ENCODE measurements at regions of chr19 and their contacts with region 1.

Region 1: GRCh38 chr19:42283143-42284065 is 14.4 kb downstream of the CIC start:
- DNase-seq: peak; percentile 97
- H3K4me3 Mint-ChIP-seq: no peak overlapping the region
- H3K27ac Mint-ChIP-seq: no peak overlapping the region
- H3K4me1 Mint-ChIP-seq: peaks cover 31% of the 10 kb centered on the region
- H3K27me3 Mint-ChIP-seq: no peaks in the 10 kb centered on the region

Region 2: DNA sequence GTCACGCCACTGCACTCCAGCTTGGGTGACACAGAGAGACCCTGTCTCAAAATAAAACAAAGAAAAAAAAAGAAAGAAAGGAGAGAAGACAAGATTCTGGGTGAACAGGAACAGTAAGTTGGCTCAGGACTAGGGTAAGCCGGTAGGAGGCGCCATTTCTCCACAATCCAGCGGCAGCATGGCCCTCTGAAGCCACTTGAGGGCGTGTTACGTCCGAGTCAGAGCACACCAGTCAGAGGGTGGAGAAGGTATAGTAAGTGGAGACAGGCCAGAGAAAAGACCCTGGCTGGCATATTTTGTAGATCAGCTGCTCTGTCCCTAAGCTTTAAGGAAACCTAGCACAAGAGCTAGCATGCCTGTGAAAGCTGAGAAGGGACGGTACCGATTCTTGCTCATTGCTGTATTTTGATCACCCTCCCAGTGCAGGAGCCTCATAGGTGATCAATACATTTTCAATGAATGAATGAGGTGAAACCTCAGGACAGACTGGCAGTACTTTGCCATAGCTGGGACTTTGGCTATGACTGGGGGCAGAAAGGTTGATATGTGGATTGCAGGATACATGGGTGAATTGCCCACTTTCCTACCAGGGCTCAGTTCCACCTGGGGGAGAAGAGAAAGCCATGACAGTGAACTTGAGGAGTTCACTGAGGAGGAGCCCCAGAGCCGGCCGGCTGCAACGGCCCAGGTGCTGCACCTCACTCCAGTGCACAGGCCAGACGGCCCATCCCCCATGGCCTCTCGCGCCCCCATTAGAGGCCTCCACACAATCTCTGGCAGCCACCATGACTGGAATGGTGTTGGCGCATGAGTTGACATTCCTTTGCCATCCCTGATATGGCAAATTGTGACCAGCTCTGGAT is 174.6 kb before region 1 on chr19:
- CTCF ChIA-PET with region 1: interaction called, 23 read pairs
- POLR2A ChIA-PET with region 1: no interaction called
- DNase-seq: peak; percentile 92
- H3K4me3 Mint-ChIP-seq: no peak overlapping the region
- H3K27ac Mint-ChIP-seq: no peak overlapping the region
- H3K4me1 Mint-ChIP-seq: peaks cover 34% of the 10 kb centered on the region
- H3K27me3 Mint-ChIP-seq: no peaks in the 10 kb centered on the region

Region 3: GRCh38 chr19:42132851-42133528 is 150.4 kb before region 1 on chr19:
- CTCF ChIA-PET with region 1: interaction called, 45 read pairs
- POLR2A ChIA-PET with region 1: interaction called, 8 read pairs
- DNase-seq: peak; percentile 85
- H3K4me3 Mint-ChIP-seq: peak overlapping the region; percentile 82
- H3K27ac Mint-ChIP-seq: peak overlapping the region; percentile 81
- H3K4me1 Mint-ChIP-seq: peaks cover 64% of the 10 kb centered on the region
- H3K27me3 Mint-ChIP-seq: no peaks in the 10 kb centered on the region

Region 4: DNA sequence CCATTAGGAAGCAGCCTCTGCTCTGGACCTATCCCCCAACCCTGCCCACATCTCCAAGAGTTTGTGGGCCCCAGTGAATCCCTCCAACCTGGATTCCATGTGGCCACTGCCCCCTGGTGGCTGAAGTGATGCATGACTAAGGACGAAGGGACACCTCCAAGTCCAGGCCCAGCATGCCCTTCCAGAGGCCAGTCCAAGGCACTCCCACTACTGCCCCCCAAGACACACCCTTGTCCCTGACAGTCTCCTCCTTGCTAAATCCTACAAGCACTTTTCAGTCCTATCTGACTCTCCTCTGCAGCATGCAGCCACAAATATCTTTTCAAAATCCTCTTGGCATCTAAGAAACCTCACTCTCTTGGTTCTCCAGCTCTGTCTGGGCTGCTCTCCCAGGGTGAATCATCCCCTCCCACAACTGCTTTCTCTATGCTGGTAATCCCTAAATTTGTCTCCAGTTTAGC is 99.0 kb before region 1 on chr19:
- CTCF ChIA-PET with region 1: interaction called, 12 read pairs
- POLR2A ChIA-PET with region 1: interaction called, 3 read pairs
- DNase-seq: peak; percentile 72
- H3K4me3 Mint-ChIP-seq: peak overlapping the region; percentile 7
- H3K27ac Mint-ChIP-seq: peak overlapping the region; percentile 89
- H3K4me1 Mint-ChIP-seq: peaks cover 57% of the 10 kb centered on the region
- H3K27me3 Mint-ChIP-seq: no peaks in the 10 kb centered on the region

Region 5: DNA sequence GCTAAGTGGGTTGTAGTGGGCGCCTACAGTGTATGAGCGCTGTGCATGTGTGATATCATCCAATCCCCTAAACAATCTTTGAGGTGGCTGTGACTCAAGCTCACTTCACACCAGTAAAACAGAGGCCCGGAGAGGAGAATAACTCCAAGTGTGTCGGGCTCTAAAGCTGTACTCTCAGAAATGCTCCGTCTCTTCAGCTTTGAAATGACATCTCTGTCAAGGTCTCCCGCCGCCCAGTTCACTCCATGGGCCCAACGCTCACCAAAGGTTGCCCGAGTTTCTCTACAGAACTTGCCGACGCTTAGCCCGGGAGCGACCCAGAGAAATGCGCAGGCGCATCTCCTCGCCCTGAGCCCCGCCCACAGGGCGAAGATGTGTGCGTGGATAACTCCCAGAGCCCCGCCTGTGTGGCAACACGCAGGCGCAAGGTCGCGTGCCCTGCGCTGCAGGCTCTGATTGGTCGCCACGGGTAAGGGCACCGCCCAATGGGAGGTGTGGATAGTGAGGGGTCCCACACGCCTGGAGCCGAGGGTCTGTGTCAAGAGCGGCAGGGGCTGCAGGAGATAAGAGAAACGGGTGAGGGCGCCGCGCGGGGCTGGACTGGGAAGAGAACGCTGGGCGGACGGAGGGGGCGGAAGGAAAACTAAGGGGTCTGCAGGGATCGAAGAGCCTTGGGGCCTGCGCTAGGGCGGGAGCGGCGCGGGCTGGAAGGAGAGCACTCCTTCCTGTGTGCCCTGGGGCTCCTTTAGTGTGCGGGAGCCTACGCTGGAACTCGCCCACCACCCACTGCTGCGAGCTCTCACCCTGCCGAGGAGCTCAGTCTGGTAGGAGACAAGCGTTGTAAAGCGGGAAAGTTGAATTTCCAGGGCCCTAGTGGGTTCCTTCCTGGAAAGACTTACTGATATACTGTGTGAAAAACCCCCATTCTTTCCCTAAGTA is 63.3 kb before region 1 on chr19 and contains the start of gene ZNF526:
- CTCF ChIA-PET with region 1: interaction called, 5 read pairs
- POLR2A ChIA-PET with region 1: interaction called, 12 read pairs
- DNase-seq: peak; percentile 98
- H3K4me3 Mint-ChIP-seq: peak within 1 kb of the TSS; percentile 93
- H3K27ac Mint-ChIP-seq: peak within 1 kb of the TSS; percentile 88
- H3K4me1 Mint-ChIP-seq: peaks cover 63% of the 10 kb centered on the region
- H3K27me3 Mint-ChIP-seq: no peaks in the 10 kb centered on the region
- total RNA-seq, gene ZNF526: 21.5 to 21.7 TPM

Region 6: DNA sequence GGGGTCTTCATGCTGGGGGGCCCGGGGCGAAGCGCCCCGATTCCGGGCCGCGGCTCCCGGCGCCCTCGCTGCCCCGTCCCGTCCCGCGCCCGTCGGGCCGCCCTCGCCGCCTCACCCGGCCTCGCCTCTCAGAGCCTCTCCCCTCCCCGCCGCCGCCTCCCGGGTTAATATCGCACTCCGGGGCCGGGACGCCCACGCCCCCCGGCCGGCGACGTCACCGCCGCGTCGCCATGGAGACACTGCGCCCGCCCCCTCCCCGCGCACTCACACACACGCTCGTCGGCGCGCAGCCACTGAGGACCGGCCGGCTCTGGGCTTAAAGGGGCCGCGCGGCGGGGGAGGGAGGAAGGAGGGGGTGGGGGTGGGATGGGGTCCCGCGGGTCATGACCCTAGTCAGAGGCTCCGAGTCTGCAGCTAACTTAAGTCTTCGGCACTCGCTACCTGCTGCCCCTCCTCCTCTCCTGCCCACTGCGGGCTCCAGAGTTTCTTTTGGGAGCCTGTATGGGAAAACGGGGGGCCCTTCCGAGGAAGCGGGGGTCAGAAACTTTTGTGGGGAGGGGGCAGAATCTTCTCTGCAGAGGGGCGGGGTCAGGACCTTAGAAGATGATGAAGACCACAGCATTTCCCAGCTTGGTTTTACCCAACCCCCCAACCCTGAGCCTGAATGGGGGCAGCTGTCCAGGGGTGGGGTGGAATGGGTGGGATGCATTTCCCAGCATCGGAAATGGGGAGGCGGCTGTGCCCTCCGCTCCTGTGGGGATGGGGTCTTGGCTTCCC is 28.2 kb before region 1 on chr19 and contains the start of gene ERF:
- CTCF ChIA-PET with region 1: interaction called, 11 read pairs
- POLR2A ChIA-PET with region 1: interaction called, 5 read pairs
- DNase-seq: peak; percentile 93
- H3K4me3 Mint-ChIP-seq: peak within 1 kb of the TSS; percentile 72
- H3K27ac Mint-ChIP-seq: peak within 1 kb of the TSS; percentile 79
- H3K4me1 Mint-ChIP-seq: peaks cover 33% of the 10 kb centered on the region
- H3K27me3 Mint-ChIP-seq: peaks cover 11% of the 10 kb centered on the region
- total RNA-seq, gene ERF: 46.9 to 52.6 TPM

Region 7: DNA sequence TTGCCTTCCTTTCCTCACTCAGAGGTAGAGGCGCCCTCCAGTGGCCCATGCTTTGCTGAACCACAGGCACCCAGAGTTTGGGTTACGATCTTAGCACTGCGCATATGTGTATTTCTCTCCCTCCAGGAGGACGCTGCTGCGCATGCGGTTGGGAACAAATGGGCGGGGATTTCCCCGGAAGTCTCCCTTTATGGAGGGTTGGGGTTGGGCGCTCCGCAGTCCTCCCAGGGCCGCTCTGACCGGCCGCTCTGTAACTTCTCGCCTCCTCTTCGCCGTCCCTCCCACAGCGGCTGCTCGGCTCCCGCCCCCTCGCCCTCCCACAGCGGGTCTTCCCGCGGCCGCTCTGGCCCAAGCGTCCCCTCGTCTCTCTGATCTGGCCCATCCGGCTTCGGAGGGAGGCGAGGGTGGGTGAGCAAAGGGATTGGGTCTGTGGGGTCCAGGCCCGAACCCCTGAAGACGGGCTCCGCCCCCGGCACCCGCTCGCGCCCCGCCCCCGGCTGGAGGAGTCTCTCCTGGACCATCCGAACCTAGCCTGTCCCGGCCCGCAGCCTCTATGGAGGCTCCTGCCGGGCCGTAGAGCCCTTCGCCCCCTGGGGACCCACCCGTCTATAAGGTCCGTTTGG is 42.0 kb after region 1 on chr19 and contains the start of gene MEGF8:
- CTCF ChIA-PET with region 1: no interaction called
- POLR2A ChIA-PET with region 1: no interaction called
- DNase-seq: peak; percentile 99
- H3K4me3 Mint-ChIP-seq: peak within 1 kb of the TSS; percentile 86
- H3K27ac Mint-ChIP-seq: peak within 1 kb of the TSS; percentile 76
- H3K4me1 Mint-ChIP-seq: peaks cover 18% of the 10 kb centered on the region
- H3K27me3 Mint-ChIP-seq: peaks cover 24% of the 10 kb centered on the region
- total RNA-seq, gene MEGF8: 4.2 to 4.7 TPM

Region 8: DNA sequence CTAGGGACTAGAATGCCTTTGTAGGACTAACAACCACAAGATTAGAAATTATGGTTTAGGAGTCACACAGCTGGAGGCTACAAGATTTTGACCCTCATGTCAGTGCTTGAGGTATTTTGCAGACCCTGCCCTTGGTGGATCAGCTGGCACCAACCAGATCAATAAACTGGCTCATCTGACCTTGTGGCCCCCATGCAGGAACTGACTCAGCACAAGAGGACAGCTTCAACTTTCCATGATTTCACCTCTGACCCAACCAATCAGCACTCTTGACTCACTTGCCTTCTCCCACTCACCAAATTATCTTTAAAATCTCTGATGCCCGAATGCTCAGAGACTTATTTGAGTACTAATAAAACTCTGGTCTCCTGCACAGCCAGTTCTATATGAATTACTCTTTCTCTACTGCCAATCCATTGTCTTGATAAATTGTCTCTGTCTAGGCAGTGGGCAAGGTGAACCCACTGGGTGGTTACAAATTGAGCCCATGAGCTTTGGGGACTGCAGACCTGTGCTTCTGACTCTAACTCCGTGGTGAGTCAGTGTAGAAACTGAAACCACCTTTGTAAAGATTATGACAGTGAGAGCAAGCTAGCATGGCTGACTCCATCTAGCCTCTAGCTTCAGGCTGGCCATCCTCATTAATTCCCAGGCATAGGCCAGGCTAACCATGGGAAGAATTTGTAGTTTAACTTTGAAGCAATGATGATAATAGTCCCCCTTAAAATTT is 345.2 kb after region 1 on chr19:
- CTCF ChIA-PET with region 1: no interaction called
- POLR2A ChIA-PET with region 1: no interaction called
- DNase-seq: peak; percentile 23
- H3K4me3 Mint-ChIP-seq: no peak overlapping the region
- H3K27ac Mint-ChIP-seq: peak overlapping the region; percentile 66
- H3K4me1 Mint-ChIP-seq: peaks cover 16% of the 10 kb centered on the region
- H3K27me3 Mint-ChIP-seq: peaks cover 3% of the 10 kb centered on the region